CD4-positive, alpha-beta T cell (primary cell): ENCODE measurements at regions of chr17 and their contacts with region 1.

Region 1: DNA sequence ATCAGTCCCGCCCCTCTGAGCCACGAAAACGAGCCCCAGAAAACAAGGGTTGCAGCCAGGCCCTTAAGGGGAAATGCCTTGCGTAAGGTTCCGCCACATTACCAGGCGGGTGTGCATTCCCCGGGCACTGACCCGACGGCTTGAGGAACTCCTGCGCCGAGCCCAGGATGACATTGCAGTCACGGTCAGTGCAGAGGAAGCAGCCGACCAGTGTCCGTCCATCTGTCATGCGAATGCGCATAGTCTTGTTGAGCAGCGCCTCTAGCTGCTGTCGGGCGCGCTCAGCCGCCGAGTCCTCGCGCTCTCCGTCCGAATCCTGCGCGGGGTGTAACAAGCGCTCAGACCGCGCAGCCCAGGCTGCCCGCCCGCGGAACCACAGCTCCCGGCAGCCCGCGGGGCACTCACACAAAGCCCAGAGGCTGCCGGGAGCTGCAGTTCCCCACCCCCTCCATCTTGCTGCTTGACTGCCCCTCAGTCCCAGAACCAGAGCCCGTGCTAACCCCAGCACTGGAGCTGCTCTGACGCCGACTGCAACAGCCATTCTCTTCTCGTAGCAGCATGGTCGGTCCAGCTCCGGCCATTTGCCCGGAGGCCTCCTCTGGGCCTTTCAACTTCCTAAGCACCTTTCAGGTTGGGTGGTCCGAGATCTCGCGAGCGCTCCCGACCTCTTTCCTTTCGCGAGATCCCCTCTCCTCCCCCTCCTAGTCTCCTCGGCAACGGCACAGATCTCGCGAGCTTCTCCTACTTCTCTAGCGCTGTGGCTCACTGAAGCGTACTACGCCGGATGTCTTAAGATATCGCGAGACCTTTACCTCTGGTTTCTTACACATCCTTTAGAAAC is at the start of gene NAA38:
- DNase-seq: peak; percentile 86 to 99 (median 91)
- ATAC-seq: peak; percentile 82
- H3K4me3 ChIP-seq: peak within 1 kb of the TSS; percentile 74
- H3K4me3 Mint-ChIP-seq: no peak within 1 kb of the TSS
- H3K27ac ChIP-seq: peak within 1 kb of the TSS; percentile 84 to 96
- H3K27ac Mint-ChIP-seq: no peak within 1 kb of the TSS
- H3K4me1 ChIP-seq: peaks cover 39% of the 10 kb centered on the region
- H3K4me1 Mint-ChIP-seq: peaks cover under 1% of the 10 kb centered on the region
- H3K27me3 ChIP-seq: no peaks in the 10 kb centered on the region
- H3K27me3 Mint-ChIP-seq: no peaks in the 10 kb centered on the region
- CTCF ChIP-seq: no peak
- total RNA-seq, gene NAA38: 15.4 to 16.3 TPM

Region 2: DNA sequence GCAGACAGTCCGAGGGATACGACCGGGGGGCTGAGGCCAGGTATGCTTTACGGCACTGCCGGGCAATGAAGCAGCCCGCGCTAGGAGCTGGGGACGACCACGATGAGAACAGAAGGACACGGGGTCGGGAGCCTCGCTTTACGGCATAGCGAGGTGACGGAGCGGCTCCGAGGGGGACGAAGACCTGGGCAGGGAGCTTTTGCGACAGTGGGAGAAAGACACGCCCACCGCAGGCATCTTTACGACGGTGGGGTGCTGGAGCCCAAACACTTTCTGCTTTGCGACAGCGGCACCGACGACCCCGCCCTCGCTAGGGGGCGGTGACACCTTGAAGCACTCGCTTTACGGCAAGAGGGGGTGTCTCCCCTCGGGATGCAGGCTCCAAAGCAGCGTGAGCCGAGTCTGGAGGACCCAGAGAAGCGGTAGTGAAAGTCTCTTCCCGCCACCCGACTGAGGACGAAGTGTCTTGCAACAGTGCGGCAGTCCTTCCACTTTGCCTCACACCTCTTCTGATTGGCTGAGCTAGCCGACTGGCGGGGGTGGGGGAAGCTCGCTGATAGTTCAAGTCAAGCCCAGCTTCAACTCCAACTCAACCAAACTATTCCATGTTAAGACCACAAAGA is 527.6 kb before region 1 on chr17:
- CTCF ChIA-PET with region 1: no interaction called
- POLR2A ChIA-PET with region 1: no interaction called
- intact Hi-C with region 1: loop called in 1 of 2 experiments (anchors 10 kb)
- DNase-seq: peak; percentile 90 to 99 (median 94)
- ATAC-seq: peak; percentile 73
- H3K4me3 ChIP-seq: peak overlapping the region; percentile 64
- H3K4me3 Mint-ChIP-seq: peak overlapping the region; percentile 90
- H3K27ac ChIP-seq: peak overlapping the region; percentile 80 to 92
- H3K27ac Mint-ChIP-seq: peak overlapping the region; percentile 88
- H3K4me1 ChIP-seq: peaks cover 58% of the 10 kb centered on the region
- H3K4me1 Mint-ChIP-seq: peaks cover 47% of the 10 kb centered on the region
- H3K27me3 ChIP-seq: no peaks in the 10 kb centered on the region
- H3K27me3 Mint-ChIP-seq: no peaks in the 10 kb centered on the region
- CTCF ChIP-seq: no peak

Region 3: GRCh38 chr17:7844292-7845154 is 12.6 kb before region 1 on chr17:
- CTCF ChIA-PET with region 1: interaction called, 6 read pairs
- POLR2A ChIA-PET with region 1: interaction called, 79 read pairs
- intact Hi-C with region 1: loop called in 1 of 2 experiments (anchors 2 kb)
- DNase-seq: peak; percentile 56 to 94 (median 73)
- ATAC-seq: peak; percentile 14
- H3K4me3 ChIP-seq: peak overlapping the region; percentile 84
- H3K4me3 Mint-ChIP-seq: peak overlapping the region; percentile 92
- H3K27ac ChIP-seq: peak overlapping the region; percentile 100
- H3K27ac Mint-ChIP-seq: peak overlapping the region; percentile 90
- H3K4me1 ChIP-seq: peaks cover 59% of the 10 kb centered on the region
- H3K4me1 Mint-ChIP-seq: peaks cover 35% of the 10 kb centered on the region
- H3K27me3 ChIP-seq: no peaks in the 10 kb centered on the region
- H3K27me3 Mint-ChIP-seq: peaks cover 10% of the 10 kb centered on the region
- CTCF ChIP-seq: no peak

Region 4: DNA sequence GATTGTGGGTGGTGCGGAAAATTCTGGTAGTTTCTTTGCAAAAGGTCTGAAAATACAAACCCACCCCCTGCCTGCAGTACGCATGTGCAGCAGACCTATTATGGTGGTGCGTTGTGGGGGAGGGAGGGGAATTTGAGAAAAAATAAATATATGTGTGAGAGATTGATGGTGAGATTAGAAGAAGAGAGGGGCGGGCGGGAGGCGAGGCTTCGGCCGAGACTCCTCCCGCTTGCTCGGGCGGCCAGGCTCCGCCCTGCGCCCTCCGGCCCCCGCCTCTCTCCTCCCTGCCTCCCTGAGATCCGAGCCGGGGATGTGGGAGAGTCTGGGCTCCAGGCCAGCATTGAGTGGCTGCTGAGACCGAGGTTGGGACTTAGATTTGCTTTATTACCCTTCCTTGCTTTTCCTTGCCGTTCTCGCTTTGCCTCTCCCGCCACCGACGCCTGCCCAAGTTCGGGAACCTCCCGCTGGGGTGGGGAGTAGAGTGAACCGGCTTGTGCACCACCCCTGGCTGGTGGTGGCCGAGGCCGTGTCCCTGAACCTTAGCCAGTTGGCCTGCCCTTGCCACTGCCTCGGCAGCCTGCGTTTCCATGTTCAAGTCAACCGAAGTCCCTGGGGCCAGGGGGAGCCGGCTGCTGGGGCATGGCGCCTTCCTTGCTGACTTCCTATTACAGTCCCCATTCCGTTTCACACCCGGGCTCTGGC is 30.5 kb after region 1 on chr17:
- CTCF ChIA-PET with region 1: interaction called, 5 read pairs
- POLR2A ChIA-PET with region 1: interaction called, 18 read pairs
- intact Hi-C with region 1: loop called (anchors 1 to 2 kb)
- DNase-seq: peak; percentile 72 to 97 (median 86)
- ATAC-seq: peak; percentile 69
- H3K4me3 ChIP-seq: peak overlapping the region; percentile 98
- H3K4me3 Mint-ChIP-seq: no peak overlapping the region
- H3K27ac ChIP-seq: peak overlapping the region; percentile 75 to 96
- H3K27ac Mint-ChIP-seq: no peak overlapping the region
- H3K4me1 ChIP-seq: peaks cover 49% of the 10 kb centered on the region
- H3K4me1 Mint-ChIP-seq: peaks cover 6% of the 10 kb centered on the region
- H3K27me3 ChIP-seq: no peaks in the 10 kb centered on the region
- H3K27me3 Mint-ChIP-seq: no peaks in the 10 kb centered on the region
- CTCF ChIP-seq: no peak

Region 5: DNA sequence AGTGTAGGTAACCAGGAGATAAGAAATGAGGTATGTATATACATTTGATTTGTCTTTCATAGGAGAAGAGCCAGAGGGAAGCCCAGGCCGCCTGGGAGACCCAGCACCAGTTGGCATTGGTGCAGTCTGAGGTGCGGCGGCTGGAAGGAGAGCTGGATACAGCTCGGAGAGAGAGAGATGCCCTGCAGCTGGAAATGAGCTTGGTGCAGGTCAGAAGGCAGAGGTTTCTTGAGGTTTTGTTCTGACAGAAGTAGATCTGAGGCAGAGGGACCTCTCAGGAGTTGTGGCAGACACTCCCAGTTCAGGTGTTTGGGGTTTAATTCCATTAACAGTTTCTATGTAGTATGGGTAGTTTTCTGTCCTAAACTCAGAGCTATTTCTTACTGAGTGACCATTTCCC is 82.9 kb after region 1 on chr17:
- CTCF ChIA-PET with region 1: no interaction called
- POLR2A ChIA-PET with region 1: no interaction called
- intact Hi-C with region 1: no loop called
- DNase-seq: no peak
- ATAC-seq: no peak
- H3K4me3 ChIP-seq: no peak overlapping the region
- H3K4me3 Mint-ChIP-seq: no peak overlapping the region
- H3K27ac ChIP-seq: no peak overlapping the region
- H3K27ac Mint-ChIP-seq: no peak overlapping the region
- H3K4me1 ChIP-seq: no peaks in the 10 kb centered on the region
- H3K4me1 Mint-ChIP-seq: peaks cover 6% of the 10 kb centered on the region
- H3K27me3 ChIP-seq: no peaks in the 10 kb centered on the region
- H3K27me3 Mint-ChIP-seq: no peaks in the 10 kb centered on the region
- CTCF ChIP-seq: no peak

Region 6: GRCh38 chr17:7989781-7990655 is 132.9 kb after region 1 on chr17:
- CTCF ChIA-PET with region 1: interaction called, 48 read pairs
- POLR2A ChIA-PET with region 1: interaction called, 14 read pairs
- intact Hi-C with region 1: loop called in 1 of 2 experiments (anchors 1 kb)
- DNase-seq: peak; percentile 79 to 98 (median 93)
- ATAC-seq: peak; percentile 91
- H3K4me3 ChIP-seq: peak overlapping the region; percentile 55
- H3K4me3 Mint-ChIP-seq: peak overlapping the region; percentile 82
- H3K27ac ChIP-seq: peak overlapping the region; percentile 24 to 78
- H3K27ac Mint-ChIP-seq: peak overlapping the region; percentile 83
- H3K4me1 ChIP-seq: peaks cover 18% of the 10 kb centered on the region
- H3K4me1 Mint-ChIP-seq: peaks cover 26% of the 10 kb centered on the region
- H3K27me3 ChIP-seq: no peaks in the 10 kb centered on the region
- H3K27me3 Mint-ChIP-seq: peaks cover 4% of the 10 kb centered on the region
- CTCF ChIP-seq: peak; percentile 94